Endothelial cell of umbilical vein (primary cell): ENCODE measurements at regions of chr12 and their contacts with region 1.

Region 1: GRCh38 chr12:108457006-108457733 is 57.9 kb upstream of the FICD start:
- DNase-seq: peak; percentile 51
- H3K4me3 ChIP-seq: no peak overlapping the region
- H3K27ac ChIP-seq: no peak overlapping the region
- H3K4me1 ChIP-seq: no peaks in the 10 kb centered on the region
- H3K27me3 ChIP-seq: no peaks in the 10 kb centered on the region
- CTCF ChIP-seq: peak; percentile 57 to 65
- POLR2A ChIP-seq: no peak

Region 2: GRCh38 chr12:107207931-107208525 is 1249.1 kb before region 1 on chr12:
- CTCF ChIA-PET with region 1: no interaction called
- POLR2A ChIA-PET with region 1: no interaction called
- dilution Hi-C with region 1: no loop called
- intact Hi-C with region 1: no loop called
- DNase-seq: no peak
- H3K4me3 ChIP-seq: no peak overlapping the region
- H3K27ac ChIP-seq: no peak overlapping the region
- H3K4me1 ChIP-seq: no peaks in the 10 kb centered on the region
- H3K27me3 ChIP-seq: no peaks in the 10 kb centered on the region
- CTCF ChIP-seq: no peak
- POLR2A ChIP-seq: no peak

Region 3: DNA sequence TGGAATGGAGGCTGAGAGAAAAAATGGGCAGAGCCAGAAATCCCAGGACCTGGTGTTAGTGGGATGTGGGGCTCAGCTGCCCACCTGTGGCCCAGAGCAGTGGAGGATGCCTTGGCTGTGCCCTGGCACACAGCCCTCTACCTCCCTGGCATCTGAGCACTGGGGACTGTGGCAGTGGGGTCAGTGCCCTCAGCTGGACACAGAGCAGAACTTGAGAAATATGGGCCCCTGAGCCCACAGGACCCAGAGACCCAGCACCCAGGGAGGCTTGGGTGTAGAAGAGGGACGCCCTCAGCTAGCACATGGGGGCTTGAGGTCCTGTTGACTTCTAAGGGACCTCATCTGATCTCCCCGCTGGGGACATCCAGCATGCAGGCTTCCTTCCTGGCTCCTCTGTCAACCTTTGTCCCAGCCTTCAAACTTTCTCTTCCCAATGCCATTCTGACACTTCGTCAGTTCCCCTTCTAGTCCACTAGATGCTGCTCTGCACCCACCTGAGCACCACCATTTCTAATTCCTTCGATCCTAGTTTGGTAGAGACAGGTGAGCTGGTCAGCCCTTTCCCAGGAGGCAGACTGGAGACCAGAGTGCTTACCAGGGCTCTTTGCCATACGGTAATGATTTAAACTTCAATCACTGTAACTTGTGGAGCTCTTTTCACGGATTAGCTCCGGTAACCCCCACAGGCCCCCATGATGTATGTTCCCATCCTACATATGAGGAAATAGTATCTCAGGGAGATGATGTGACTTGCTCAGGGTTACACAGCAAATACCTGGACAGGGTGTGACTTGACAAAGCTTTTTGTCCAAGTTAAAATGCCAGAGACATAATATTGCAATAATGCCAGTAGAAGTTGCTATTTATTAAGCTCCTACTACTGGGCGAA is 539.0 kb before region 1 on chr12:
- CTCF ChIA-PET with region 1: interaction called, 11 read pairs
- POLR2A ChIA-PET with region 1: no interaction called
- dilution Hi-C with region 1: no loop called
- intact Hi-C with region 1: loop called (anchors 1 kb)
- DNase-seq: no peak
- H3K4me3 ChIP-seq: no peak overlapping the region
- H3K27ac ChIP-seq: no peak overlapping the region
- H3K4me1 ChIP-seq: no peaks in the 10 kb centered on the region
- H3K27me3 ChIP-seq: no peaks in the 10 kb centered on the region
- CTCF ChIP-seq: peak; percentile 24 to 54
- POLR2A ChIP-seq: no peak

Region 4: DNA sequence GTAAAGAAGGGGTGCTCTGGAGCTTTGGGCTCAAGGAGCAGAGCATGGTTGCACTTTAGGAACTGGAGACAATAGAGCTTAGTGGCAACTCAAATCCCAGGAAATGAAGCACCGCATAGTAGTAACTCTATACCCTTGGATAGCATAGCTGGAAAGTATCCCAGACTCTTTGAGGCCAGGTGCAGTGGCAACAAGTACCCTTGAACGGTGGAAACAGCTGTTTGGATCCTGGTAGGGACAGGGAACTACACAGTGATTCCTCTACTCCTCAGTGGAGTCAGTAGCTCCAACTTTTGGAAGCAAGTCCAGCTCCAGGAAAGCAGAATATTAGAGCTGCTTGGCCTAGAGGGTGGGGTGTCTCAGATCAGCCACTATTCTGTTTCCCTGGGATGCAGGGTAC is 457.1 kb before region 1 on chr12:
- CTCF ChIA-PET with region 1: no interaction called
- POLR2A ChIA-PET with region 1: no interaction called
- dilution Hi-C with region 1: no loop called
- intact Hi-C with region 1: no loop called
- DNase-seq: no peak
- H3K4me3 ChIP-seq: no peak overlapping the region
- H3K27ac ChIP-seq: no peak overlapping the region
- H3K4me1 ChIP-seq: no peaks in the 10 kb centered on the region
- H3K27me3 ChIP-seq: no peaks in the 10 kb centered on the region
- CTCF ChIP-seq: no peak
- POLR2A ChIP-seq: no peak

Region 5: GRCh38 chr12:108063192-108063591 is 394.0 kb before region 1 on chr12:
- CTCF ChIA-PET with region 1: interaction called, 29 read pairs
- POLR2A ChIA-PET with region 1: no interaction called
- dilution Hi-C with region 1: no loop called
- intact Hi-C with region 1: loop called (anchors 1 kb)
- DNase-seq: peak; percentile 36
- H3K4me3 ChIP-seq: no peak overlapping the region
- H3K27ac ChIP-seq: no peak overlapping the region
- H3K4me1 ChIP-seq: no peaks in the 10 kb centered on the region
- H3K27me3 ChIP-seq: no peaks in the 10 kb centered on the region
- CTCF ChIP-seq: peak; percentile 37
- POLR2A ChIP-seq: no peak

Region 6: DNA sequence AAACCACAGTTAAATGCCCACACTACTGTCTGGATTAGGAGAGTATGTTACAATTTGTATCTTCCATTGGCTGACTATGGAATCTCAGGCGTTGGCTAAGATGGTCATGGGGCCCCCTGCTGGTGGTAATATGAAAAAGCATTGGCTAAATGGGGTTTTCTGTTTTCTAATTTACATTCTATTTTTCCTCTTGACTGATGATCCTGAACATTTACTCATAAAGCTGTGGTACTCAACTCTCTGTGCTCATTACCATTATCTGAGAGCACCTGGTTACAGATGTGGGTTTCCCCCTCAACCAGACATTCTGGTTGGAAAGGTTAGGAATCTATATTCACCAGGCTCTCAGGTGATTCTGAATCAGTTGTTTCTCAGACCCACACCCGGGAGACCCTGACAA is 263.3 kb before region 1 on chr12:
- CTCF ChIA-PET with region 1: no interaction called
- POLR2A ChIA-PET with region 1: no interaction called
- dilution Hi-C with region 1: no loop called
- intact Hi-C with region 1: loop called (anchors 2 kb)
- DNase-seq: peak; percentile 21
- H3K4me3 ChIP-seq: no peak overlapping the region
- H3K27ac ChIP-seq: no peak overlapping the region
- H3K4me1 ChIP-seq: no peaks in the 10 kb centered on the region
- H3K27me3 ChIP-seq: no peaks in the 10 kb centered on the region
- CTCF ChIP-seq: peak; percentile 65
- POLR2A ChIP-seq: no peak

Region 7: DNA sequence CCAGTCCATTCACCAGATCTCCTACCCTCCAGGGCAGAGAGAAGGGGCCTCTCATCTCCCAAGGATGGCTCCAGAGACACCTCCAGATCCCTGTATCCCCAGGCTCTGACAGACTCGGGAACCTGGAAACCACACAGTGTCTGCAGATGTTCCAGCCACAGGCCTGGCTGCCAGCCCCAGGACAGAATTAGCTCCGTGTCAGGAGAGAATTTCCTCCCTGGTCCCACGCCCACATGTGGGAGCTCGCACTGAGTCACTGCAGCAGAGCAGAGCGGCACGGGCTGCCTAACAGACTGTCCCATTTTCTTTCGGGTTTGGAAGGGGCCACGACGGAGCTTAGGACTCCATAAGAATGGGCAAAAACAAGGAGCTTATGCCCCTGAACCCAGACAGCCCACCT is 151.7 kb before region 1 on chr12:
- CTCF ChIA-PET with region 1: no interaction called
- POLR2A ChIA-PET with region 1: no interaction called
- dilution Hi-C with region 1: no loop called
- intact Hi-C with region 1: loop called (anchors 5 kb)
- DNase-seq: no peak
- H3K4me3 ChIP-seq: no peak overlapping the region
- H3K27ac ChIP-seq: peak overlapping the region; percentile 79
- H3K4me1 ChIP-seq: peaks cover 39% of the 10 kb centered on the region
- H3K27me3 ChIP-seq: no peaks in the 10 kb centered on the region
- CTCF ChIP-seq: no peak
- POLR2A ChIP-seq: no peak

Region 8: GRCh38 chr12:109134186-109134917 is 677.2 kb after region 1 on chr12:
- CTCF ChIA-PET with region 1: no interaction called
- POLR2A ChIA-PET with region 1: no interaction called
- dilution Hi-C with region 1: no loop called
- intact Hi-C with region 1: no loop called
- DNase-seq: no peak
- H3K4me3 ChIP-seq: no peak overlapping the region
- H3K27ac ChIP-seq: no peak overlapping the region
- H3K4me1 ChIP-seq: no peaks in the 10 kb centered on the region
- H3K27me3 ChIP-seq: no peaks in the 10 kb centered on the region
- CTCF ChIP-seq: peak; percentile 45 to 63
- POLR2A ChIP-seq: no peak